A673 (cell line): ENCODE measurements at regions of chr4 and their contacts with region 1.

Region 1: DNA sequence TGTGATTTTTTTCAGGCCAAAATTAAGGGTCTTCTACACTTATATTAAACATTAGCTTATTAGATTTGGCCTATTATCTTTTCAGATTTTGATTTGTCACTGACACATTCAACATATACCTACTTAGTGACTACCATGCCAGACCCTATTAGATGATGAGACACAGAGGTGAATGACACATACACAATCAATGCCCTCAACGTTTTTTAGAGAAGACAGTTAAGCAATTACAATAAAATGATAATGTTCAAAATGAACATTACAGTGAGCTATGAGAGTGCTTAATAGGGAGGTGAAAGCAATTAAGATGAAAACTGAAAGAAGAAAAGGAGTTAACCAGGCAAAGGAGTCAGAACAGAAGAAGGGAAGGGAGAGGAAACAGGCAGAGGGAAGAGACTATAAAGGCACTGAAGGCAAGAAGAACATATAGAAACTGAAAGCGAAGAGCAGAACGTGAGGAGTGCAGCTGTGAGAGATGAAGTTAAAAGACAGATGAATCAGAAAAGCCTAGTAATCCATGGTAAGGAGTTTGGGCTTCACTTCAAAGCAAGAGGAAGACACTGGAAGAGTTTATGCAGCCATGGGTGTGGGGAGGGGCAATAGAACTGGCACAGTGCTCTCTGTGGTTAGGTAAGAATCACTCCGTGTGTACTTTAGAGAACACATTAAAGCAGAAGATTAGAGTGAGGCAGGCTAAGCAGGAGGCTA is 119.0 kb downstream of the REELD1 start:
- DNase-seq: peak; percentile 47
- H3K4me3 ChIP-seq: peak overlapping the region; percentile 10
- H3K27ac ChIP-seq: no peak overlapping the region
- H3K4me1 ChIP-seq: peaks cover 75% of the 10 kb centered on the region
- H3K27me3 ChIP-seq: no peaks in the 10 kb centered on the region
- CTCF ChIP-seq: no peak

Region 2: GRCh38 chr4:146095091-146095690 is 238.2 kb before region 1 on chr4:
- CTCF ChIA-PET with region 1: no interaction called
- POLR2A ChIA-PET with region 1: no interaction called
- intact Hi-C with region 1: loop called (anchors 10 kb)
- DNase-seq: peak; percentile 68
- H3K4me3 ChIP-seq: no peak overlapping the region
- H3K27ac ChIP-seq: no peak overlapping the region
- H3K4me1 ChIP-seq: no peaks in the 10 kb centered on the region
- H3K27me3 ChIP-seq: no peaks in the 10 kb centered on the region
- CTCF ChIP-seq: peak; percentile 88